Sigmoid colon (tissue), 7 donors: ENCODE measurements at regions of chr13 and their contacts with region 1.

Region 1: DNA sequence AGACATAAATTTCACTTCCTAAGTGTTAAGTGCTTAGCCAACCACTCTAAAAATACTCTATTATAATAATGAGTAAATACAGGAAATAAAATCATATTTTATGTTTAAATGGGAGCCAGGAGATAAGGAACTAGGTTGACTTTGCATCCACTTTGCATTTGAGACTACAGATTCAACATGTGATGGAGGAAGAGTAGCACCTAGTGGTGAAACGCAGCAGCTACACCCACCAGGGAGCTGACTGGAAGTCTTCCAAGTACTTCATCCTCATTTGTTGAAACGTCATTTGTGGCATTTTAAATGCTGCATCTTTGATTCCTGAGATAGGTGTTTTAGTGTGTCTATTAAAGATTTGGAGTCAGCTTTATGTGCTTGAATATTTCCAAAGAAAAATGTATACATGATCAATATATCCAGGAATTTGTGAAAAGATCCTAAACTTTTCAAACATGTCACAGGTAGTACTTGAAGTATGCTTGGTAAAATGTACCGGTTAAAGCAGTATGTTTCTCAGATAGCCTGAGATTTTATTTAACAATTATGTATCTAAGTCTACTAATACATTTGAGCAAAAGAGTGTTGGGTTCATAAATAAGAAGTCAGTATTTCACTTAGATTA is 17.4 kb upstream of the KCTD12 start:
- DNase-seq: peak; percentile 79
- H3K4me3 ChIP-seq: no peak overlapping the region
- H3K27ac ChIP-seq: no peak overlapping the region
- H3K4me1 ChIP-seq: no peaks in the 10 kb centered on the region
- H3K27me3 ChIP-seq: no peaks in the 10 kb centered on the region
- CTCF ChIP-seq: peak; percentile 84 to 99 (median 95)
- EP300 ChIP-seq: no peak
- POLR2A ChIP-seq: no peak

Region 2: DNA sequence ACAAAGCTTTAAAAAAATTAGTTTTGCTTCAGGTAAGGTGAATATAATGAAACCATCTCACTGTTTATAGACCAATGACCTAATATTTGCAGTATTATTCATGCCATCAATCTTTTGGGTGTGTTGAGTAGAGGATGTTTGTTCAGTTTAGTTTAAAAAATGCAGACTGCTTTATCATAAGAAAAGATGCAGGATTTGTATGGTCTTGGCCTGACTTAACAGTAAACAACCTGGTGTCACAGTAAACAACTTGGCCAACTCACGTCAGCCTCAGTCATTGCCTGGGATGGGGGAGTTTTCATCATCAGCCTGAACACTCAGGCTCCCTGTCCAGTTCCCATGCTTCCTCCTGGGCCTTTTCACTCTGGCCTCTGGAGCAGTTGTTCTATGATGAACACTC is 1212.5 kb before region 1 on chr13:
- intact Hi-C with region 1: loop called (anchors 10 kb)
- DNase-seq: no peak
- H3K4me3 ChIP-seq: no peak overlapping the region
- H3K27ac ChIP-seq: no peak overlapping the region
- H3K4me1 ChIP-seq: no peaks in the 10 kb centered on the region
- H3K27me3 ChIP-seq: no peaks in the 10 kb centered on the region
- CTCF ChIP-seq: no peak
- EP300 ChIP-seq: no peak
- POLR2A ChIP-seq: no peak

Region 3: GRCh38 chr13:75870397-75870903 is 1033.2 kb before region 1 on chr13:
- intact Hi-C with region 1: loop called (anchors 2 kb)
- DNase-seq: no peak
- H3K4me3 ChIP-seq: peak overlapping the region in 3 of 4 donors; percentile 26 to 32 (median 31)
- H3K27ac ChIP-seq: no peak overlapping the region
- H3K4me1 ChIP-seq: no peaks in the 10 kb centered on the region
- H3K27me3 ChIP-seq: no peaks in the 10 kb centered on the region
- CTCF ChIP-seq: peak; percentile 40 to 82 (median 58)
- EP300 ChIP-seq: no peak
- POLR2A ChIP-seq: no peak

Region 4: GRCh38 chr13:76667551-76667950 is 236.1 kb before region 1 on chr13:
- intact Hi-C with region 1: loop called (anchors 2 kb)
- DNase-seq: no peak
- H3K4me3 ChIP-seq: no peak overlapping the region
- H3K27ac ChIP-seq: no peak overlapping the region
- H3K4me1 ChIP-seq: peaks cover 0 to 11% (median 4%) of the 10 kb centered on the region in 4 donors
- H3K27me3 ChIP-seq: no peaks in the 10 kb centered on the region
- CTCF ChIP-seq: peak in 3 of 4 experiments; percentile 22 to 45 (median 33)
- EP300 ChIP-seq: no peak
- POLR2A ChIP-seq: no peak

Region 5: GRCh38 chr13:76937281-76937820 is 33.7 kb after region 1 on chr13:
- intact Hi-C with region 1: no loop called
- DNase-seq: no peak
- H3K4me3 ChIP-seq: no peak overlapping the region
- H3K27ac ChIP-seq: no peak overlapping the region
- H3K4me1 ChIP-seq: no peaks in the 10 kb centered on the region
- H3K27me3 ChIP-seq: no peaks in the 10 kb centered on the region
- CTCF ChIP-seq: no peak
- EP300 ChIP-seq: no peak
- POLR2A ChIP-seq: no peak